ENCODE measurements at regions of chr2 and their contacts with region 1.

Region 1: DNA sequence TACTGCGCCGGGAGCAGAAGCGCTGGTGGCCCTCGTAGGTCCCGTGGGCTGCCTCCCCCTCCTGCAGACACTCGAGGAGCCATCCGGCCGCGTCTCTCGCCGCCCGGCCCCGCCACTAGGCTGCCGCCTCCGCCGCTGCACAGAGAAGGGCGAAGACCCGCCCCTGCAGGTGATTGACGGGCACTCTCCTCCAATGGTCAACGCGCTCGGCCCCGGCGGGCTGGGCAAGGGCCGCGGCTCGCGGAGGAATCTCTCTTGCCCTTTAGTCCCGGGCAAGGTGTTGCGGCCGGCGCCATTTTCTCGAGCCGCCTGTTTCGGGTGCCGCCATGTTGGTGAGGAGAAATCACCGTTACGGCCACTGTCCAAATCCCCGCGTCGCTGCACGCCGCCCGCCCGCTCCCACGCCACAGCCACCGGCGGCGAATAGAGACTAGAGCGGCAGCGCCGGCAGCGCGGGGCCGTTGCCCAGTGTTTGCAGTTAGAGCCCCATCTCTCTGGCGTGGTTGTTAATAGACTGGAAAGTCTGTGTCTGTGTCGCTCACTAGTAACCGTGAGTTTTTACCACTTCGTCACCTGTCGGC is at the start of gene ZC3H6:
- DNase-seq: peak; percentile 98
- ATAC-seq: peak; percentile 96
- H3K4me3 ChIP-seq: peak within 1 kb of the TSS; percentile 86
- H3K27ac ChIP-seq: peak within 1 kb of the TSS; percentile 99
- H3K4me1 ChIP-seq: no peaks in the 10 kb centered on the region
- H3K27me3 ChIP-seq: no peaks in the 10 kb centered on the region
- CTCF ChIP-seq: peak; percentile 29; the same call in 1 of the 2 replicates
- POLR2A ChIP-seq: peak; percentile 92
- RAD21 ChIP-seq: 0 out of 2 replicates have a peak, but pooled peaks have one; percentile 13
- total RNA-seq, gene ZC3H6: 2.0 and 2.2 TPM in 2 replicates

Region 2: GRCh38 chr2:112168422-112169102 is 106.8 kb before region 1 on chr2:
- CTCF ChIA-PET with region 1: no interaction called
- POLR2A ChIA-PET with region 1: no interaction called
- dilution Hi-C with region 1: no loop called
- in situ Hi-C with region 1: no loop called
- intact Hi-C with region 1: no loop called
- DNase-seq: no peak
- ATAC-seq: no peak
- H3K4me3 ChIP-seq: no peak overlapping the region
- H3K27ac ChIP-seq: no peak overlapping the region
- H3K4me1 ChIP-seq: no peaks in the 10 kb centered on the region
- H3K27me3 ChIP-seq: no peaks in the 10 kb centered on the region; the same call in 1 of the 2 replicates
- CTCF ChIP-seq: no peak
- POLR2A ChIP-seq: no peak
- RAD21 ChIP-seq: no peak

Region 3: GRCh38 chr2:112343827-112344585 is 68.6 kb after region 1 on chr2:
- CTCF ChIA-PET with region 1: no interaction called
- POLR2A ChIA-PET with region 1: interaction called, 5 read pairs
- dilution Hi-C with region 1: no loop called
- in situ Hi-C with region 1: no loop called
- intact Hi-C with region 1: loop called (anchors 5 kb)
- DNase-seq: peak; percentile 10
- ATAC-seq: no peak; the same call in 1 of the 2 replicates
- H3K4me3 ChIP-seq: no peak overlapping the region
- H3K27ac ChIP-seq: no peak overlapping the region
- H3K4me1 ChIP-seq: no peaks in the 10 kb centered on the region
- H3K27me3 ChIP-seq: peaks cover 2% of the 10 kb centered on the region; the same call in 1 of the 2 replicates
- CTCF ChIP-seq: no peak
- POLR2A ChIP-seq: no peak
- RAD21 ChIP-seq: no peak

Region 4: GRCh38 chr2:112519506-112519905 is 244.1 kb after region 1 on chr2:
- CTCF ChIA-PET with region 1: no interaction called
- POLR2A ChIA-PET with region 1: no interaction called
- dilution Hi-C with region 1: no loop called
- in situ Hi-C with region 1: no loop called
- intact Hi-C with region 1: no loop called
- DNase-seq: no peak
- ATAC-seq: no peak
- H3K4me3 ChIP-seq: no peak overlapping the region
- H3K27ac ChIP-seq: no peak overlapping the region
- H3K4me1 ChIP-seq: no peaks in the 10 kb centered on the region
- H3K27me3 ChIP-seq: no peaks in the 10 kb centered on the region
- CTCF ChIP-seq: no peak
- POLR2A ChIP-seq: no peak
- RAD21 ChIP-seq: no peak

Measured in IMR-90 (cell line).